Activated CD4-positive, alpha-beta T cell treated with anti-CD3 and anti-CD28 coated beads, Interleukin-2, amount 10 ng/mL, durations not matched to agents 24 days and 14 days (primary cell): ENCODE measurements at regions of chr5 and their contacts with region 1.

Region 1: DNA sequence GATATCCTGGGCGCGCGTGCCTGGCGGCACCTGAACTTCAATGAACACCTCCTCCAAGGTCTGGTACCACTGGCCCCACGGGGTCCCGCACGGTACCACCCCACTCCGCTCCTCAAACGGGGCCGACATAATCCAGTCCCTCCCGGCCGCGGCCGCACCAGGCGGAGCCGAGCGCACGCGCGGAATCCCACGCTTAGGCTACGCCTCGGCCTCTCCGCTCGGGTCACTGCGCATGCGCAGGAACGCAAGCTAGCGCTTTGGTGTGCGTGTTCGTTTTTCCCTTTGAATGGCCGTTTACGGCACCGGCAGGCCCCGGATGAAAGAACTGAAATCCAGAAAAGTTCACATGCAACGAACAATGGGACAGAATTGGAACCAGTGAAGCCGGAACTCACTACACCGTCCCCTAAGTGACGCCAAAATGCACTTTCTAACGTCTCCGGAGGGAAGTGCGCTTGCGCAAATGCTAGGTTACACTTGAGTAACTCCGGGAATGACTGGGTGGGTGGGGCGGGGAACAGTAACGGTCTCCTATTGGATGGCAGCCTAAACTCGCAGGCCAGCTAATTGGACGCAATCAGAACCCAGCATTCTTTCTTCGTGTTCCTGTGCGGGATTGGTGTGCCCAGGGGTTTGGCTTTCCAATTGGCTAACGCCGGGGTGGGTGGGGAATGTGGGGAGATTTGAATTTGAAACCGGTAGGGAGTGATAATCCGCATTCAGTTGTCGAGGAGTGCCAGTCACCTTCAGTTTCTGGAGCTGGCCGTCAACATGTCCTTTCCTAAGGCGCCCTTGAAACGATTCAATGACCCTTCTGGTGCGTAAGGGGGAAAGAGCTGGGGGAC is at the starts of genes HMMR and NUDCD2:
- DNase-seq: peak; percentile 98
- H3K4me3 Mint-ChIP-seq: peak within 1 kb of the TSS; percentile 90
- H3K27ac Mint-ChIP-seq: peak within 1 kb of the TSS; percentile 99
- H3K4me1 Mint-ChIP-seq: peaks cover 46% of the 10 kb centered on the region
- H3K27me3 Mint-ChIP-seq: no peaks in the 10 kb centered on the region
- total RNA-seq, gene HMMR: 29.1 and 30.8 TPM in 2 replicates
- total RNA-seq, gene NUDCD2: 44.5 and 50.3 TPM in 2 replicates

Region 2: GRCh38 chr5:162824360-162824759 is 635.8 kb before region 1 on chr5:
- intact Hi-C with region 1: no loop called
- DNase-seq: no peak
- H3K4me3 Mint-ChIP-seq: no peak overlapping the region
- H3K27ac Mint-ChIP-seq: no peak overlapping the region
- H3K4me1 Mint-ChIP-seq: no peaks in the 10 kb centered on the region
- H3K27me3 Mint-ChIP-seq: no peaks in the 10 kb centered on the region

Region 3: GRCh38 chr5:163373428-163374084 is 86.6 kb before region 1 on chr5:
- intact Hi-C with region 1: no loop called
- DNase-seq: no peak
- H3K4me3 Mint-ChIP-seq: no peak overlapping the region
- H3K27ac Mint-ChIP-seq: no peak overlapping the region
- H3K4me1 Mint-ChIP-seq: no peaks in the 10 kb centered on the region
- H3K27me3 Mint-ChIP-seq: no peaks in the 10 kb centered on the region

Region 4: DNA sequence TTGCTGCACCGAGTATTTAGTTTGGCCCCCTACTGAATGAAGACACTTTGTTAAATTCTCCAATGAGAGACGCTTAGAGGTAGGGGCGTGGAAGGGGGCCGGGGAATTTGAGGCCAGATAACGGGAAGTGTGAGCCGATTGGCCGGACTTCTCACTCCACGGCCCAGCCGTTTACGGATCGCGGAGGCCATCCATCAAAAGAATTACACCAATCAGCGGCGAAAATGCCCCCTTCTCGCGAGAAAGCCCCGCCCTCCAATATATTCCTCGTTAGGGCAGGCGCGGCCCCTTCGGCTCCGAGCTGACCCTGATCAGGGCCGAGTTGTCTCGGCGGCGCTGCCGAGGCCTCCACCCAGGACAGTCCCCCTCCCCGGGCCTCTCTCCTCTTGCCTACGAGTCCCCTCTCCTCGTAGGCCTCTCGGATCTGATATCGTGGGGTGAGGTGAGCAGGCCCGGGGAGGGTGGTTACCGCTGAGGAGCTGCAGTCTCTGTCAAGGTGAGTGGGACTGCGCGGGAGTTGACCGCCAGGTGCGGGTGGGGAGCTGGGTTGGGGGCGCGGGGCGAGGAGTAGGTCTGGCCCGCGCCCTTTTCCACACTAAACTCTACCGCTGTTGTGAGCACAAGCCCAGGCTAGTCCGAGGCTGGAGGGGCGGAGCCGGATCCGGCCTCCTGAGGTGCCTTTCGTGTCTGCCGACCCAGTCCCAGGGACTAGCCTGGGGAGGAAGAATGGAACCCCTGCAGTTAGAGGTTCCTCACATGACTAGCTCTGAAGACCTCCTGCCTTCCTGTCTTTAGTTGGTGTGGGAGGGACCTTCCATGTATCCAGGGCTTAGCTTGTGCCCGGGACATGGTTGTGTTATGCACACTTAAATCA is 22.6 kb before region 1 on chr5 and contains the start of gene CCNG1:
- intact Hi-C with region 1: loop called (anchors 1 kb)
- DNase-seq: peak; percentile 97
- H3K4me3 Mint-ChIP-seq: peak within 1 kb of the TSS; percentile 93
- H3K27ac Mint-ChIP-seq: peak within 1 kb of the TSS; percentile 92
- H3K4me1 Mint-ChIP-seq: peaks cover 47% of the 10 kb centered on the region
- H3K27me3 Mint-ChIP-seq: peaks cover 9% of the 10 kb centered on the region
- total RNA-seq, gene CCNG1: 72.5 and 75.1 TPM in 2 replicates